PC-3 (cell line): ENCODE measurements at regions of chr17 and their contacts with region 1.

Region 1: GRCh38 chr17:29111816-29112499 is 68.2 kb downstream of the MYO18A start:
- DNase-seq: peak; percentile 60
- ATAC-seq: peak; percentile 67
- H3K4me3 ChIP-seq: no peak overlapping the region
- H3K27ac ChIP-seq: no peak overlapping the region
- H3K4me1 ChIP-seq: peaks cover 14% of the 10 kb centered on the region
- H3K27me3 ChIP-seq: no peaks in the 10 kb centered on the region
- CTCF ChIP-seq: peak; percentile 80

Region 2: DNA sequence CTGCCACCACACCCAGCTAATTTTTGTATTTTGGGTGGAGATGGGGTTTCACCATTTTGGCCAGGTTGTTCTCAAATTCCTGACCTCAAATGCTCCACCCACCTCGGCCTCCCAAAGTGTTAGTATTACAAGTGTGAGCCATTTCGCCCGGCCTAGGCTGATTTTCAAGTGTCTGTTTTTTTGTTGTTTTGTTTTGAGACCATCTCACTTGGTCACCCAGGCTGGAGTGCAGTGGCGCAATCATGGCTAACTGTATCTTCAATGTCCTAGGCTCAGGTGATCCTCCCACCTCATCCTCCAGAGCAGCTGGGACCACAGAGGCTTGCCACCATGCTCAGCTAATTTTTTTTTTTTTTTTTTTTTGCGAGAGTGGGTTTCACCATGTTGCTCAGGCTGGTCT is 379.3 kb before region 1 on chr17:
- CTCF ChIA-PET with region 1: no interaction called
- POLR2A ChIA-PET with region 1: interaction called, 21 read pairs
- intact Hi-C with region 1: no loop called
- DNase-seq: no peak
- ATAC-seq: no peak
- H3K4me3 ChIP-seq: no peak overlapping the region
- H3K27ac ChIP-seq: no peak overlapping the region
- H3K4me1 ChIP-seq: peaks cover 16% of the 10 kb centered on the region
- H3K27me3 ChIP-seq: no peaks in the 10 kb centered on the region
- CTCF ChIP-seq: no peak

Region 3: DNA sequence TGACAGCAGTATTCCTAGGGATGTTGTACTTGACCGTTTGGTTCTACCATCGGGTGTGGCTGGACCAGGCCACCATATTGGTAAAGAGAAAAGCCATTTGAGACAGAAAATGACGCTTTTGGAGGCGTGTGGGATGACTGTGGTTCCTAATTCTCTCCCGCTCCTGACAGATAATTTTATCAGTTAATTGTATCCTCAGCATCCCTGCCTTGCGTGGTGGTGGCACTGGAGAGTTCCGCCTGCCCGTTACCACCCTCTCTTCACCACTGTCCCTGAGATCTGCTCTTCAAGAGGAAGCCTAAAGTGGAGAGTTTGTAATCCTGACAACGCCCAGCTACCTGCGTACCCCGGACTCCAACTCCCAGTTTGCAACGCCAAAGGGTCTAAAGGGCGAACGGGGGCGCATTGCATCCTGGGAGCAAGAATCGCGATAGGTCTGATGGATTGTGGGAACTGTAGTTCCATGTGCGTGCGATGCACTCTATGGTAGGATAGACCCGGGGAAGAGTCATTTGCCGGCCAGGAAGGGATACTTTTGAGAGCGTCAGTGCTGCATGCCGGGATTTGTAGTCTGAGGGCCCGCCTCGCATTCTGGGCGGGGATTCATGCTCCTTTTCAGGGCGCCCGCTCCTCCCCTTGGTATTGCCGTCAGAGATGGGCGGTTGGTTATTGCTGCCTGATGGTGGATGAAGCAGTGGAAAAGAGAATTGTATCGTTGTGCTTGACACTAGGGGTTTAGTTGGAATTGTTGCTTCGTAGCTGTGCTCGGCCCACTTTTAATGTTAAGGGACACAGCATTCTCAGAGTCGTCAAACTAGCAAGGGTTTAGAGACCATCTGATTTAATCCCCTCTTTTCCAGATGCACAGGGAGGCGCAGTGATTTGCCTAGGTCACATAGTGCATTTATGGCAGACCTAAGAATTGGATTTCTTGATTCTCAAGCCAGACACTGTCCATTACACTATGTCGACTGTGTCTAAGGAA is 159.7 kb before region 1 on chr17:
- CTCF ChIA-PET with region 1: no interaction called
- POLR2A ChIA-PET with region 1: no interaction called
- intact Hi-C with region 1: no loop called
- DNase-seq: peak; percentile 97
- ATAC-seq: peak; percentile 77
- H3K4me3 ChIP-seq: peak overlapping the region; percentile 82
- H3K27ac ChIP-seq: peak overlapping the region; percentile 97
- H3K4me1 ChIP-seq: peaks cover 22% of the 10 kb centered on the region
- H3K27me3 ChIP-seq: no peaks in the 10 kb centered on the region
- CTCF ChIP-seq: no peak

Region 4: GRCh38 chr17:29138971-29139691 is 27.2 kb after region 1 on chr17:
- CTCF ChIA-PET with region 1: no interaction called
- POLR2A ChIA-PET with region 1: no interaction called
- intact Hi-C with region 1: no loop called
- DNase-seq: no peak
- ATAC-seq: no peak
- H3K4me3 ChIP-seq: no peak overlapping the region
- H3K27ac ChIP-seq: no peak overlapping the region
- H3K4me1 ChIP-seq: peaks cover 23% of the 10 kb centered on the region
- H3K27me3 ChIP-seq: no peaks in the 10 kb centered on the region
- CTCF ChIP-seq: no peak

Region 5: GRCh38 chr17:30000001-30000754 is 888.2 kb after region 1 on chr17:
- CTCF ChIA-PET with region 1: no interaction called
- POLR2A ChIA-PET with region 1: no interaction called
- intact Hi-C with region 1: no loop called
- DNase-seq: peak; percentile 20
- ATAC-seq: peak; percentile 51
- H3K4me3 ChIP-seq: no peak overlapping the region
- H3K27ac ChIP-seq: no peak overlapping the region
- H3K4me1 ChIP-seq: peaks cover 13% of the 10 kb centered on the region
- H3K27me3 ChIP-seq: no peaks in the 10 kb centered on the region
- CTCF ChIP-seq: peak; percentile 37